Cardiac septum (tissue), 1 donor: ENCODE measurements at regions of chr19 and their contacts with region 1.

Region 1: GRCh38 chr19:56594783-56595547 is at the start of gene ZNF71:
- DNase-seq: peak; percentile 92
- total RNA-seq, gene ZNF71: 7.1 TPM

Region 2: GRCh38 chr19:56393119-56394012 is 201.6 kb before region 1 on chr19 and contains the start of gene ZNF582:
- intact Hi-C with region 1: no loop called
- DNase-seq: peak; percentile 95
- total RNA-seq, gene ZNF582: 4.9 TPM

Region 3: DNA sequence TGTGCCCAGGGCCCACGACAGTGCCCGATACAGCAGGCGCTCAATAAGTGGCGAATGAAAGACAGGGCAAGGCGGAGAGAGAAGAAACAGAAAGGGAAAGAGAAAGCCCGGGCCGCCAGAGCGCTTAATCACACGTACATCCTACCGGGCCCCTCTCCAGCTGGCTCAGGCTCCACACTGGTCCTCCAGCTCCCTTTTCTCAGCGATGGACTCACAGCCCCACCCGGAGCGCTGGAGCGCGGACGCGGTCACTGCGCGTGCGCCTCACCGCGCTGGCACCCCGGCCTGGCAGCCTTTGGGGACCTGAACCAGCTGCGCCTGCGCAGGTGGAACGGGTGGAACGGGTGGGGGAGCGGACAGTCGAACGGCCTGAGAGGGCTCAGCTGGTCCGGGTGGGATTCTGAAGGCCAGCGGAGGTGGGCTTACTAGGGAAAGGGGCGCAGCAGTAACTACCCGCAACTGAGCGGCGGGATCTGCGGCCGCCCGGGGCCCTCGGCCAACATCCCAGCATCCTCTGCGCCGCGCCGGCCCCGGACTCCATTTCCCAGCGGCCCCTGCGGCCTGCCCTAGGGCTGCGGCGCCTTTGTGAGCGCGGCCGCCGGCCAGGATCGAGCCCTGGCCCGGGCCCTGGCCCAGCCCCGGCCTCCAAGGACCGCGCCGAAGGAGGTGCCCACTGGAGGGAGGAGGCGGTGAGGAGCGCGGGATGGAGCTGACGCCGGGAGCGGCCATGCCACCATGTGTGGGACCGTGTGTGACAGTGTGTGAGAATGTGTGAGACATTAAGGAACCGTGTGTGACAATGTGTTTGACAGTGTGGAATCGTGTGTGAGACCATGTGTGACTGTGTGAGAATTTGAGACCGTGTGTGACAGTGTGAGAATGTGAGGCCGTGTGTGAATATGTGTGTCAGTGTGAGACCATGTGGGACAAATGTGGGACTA is 190.9 kb before region 1 on chr19 and contains the start of gene ZNF583:
- intact Hi-C with region 1: loop called (anchors 5 kb)
- DNase-seq: peak; percentile 96
- total RNA-seq, gene ZNF583: 7.3 TPM

Region 4: GRCh38 chr19:56507446-56508289 is 87.3 kb before region 1 on chr19 and contains the start of gene ZNF471:
- intact Hi-C with region 1: loop called (anchors 10 kb)
- DNase-seq: peak; percentile 98
- total RNA-seq, gene ZNF471: 7.2 TPM

Region 5: DNA sequence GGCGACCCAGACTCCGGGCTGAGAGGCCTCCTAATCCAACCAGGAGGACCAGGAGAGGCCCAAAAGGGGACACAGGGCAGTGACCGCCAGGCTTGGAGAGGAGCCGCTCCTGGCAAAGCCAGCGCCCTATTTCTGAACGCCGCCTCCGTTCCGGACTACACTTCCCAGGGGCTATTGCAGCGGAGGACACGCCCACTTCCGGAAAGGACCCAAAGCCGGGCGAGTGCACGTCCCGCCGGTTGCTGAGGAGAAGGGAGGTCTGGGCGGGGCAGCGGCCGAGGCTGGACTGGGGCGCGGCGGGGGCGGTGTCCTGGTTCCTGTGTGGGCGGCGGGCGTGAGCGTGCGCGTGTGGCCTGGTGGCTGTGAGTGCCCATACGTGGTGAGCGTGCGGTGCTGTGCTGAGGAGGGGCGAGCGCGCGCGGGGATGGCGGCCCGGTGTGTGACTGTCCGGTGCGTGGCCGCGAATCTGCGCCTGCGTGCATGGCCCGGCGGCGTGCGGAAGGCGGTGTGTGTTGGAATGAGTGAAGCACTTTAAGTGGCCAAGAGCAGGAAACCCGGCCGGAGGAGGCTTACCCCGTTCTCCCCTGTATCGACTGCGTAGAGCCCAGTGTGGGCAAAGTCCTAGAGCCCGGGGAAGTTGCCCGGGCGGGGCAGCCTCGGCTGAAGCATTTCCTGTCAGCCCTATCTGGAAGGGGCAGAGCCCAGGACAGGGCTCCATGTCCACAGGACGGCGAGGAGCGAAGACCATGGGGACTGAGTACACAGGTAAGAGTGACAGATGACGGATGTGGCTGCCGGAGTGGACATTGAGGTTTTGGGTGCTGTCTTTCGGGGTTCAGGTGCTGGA is 27.5 kb before region 1 on chr19 and contains the start of gene ZNF470:
- intact Hi-C with region 1: loop called (anchors 2 kb)
- DNase-seq: peak; percentile 96
- total RNA-seq, gene ZNF470: 6.6 TPM

Region 6: DNA sequence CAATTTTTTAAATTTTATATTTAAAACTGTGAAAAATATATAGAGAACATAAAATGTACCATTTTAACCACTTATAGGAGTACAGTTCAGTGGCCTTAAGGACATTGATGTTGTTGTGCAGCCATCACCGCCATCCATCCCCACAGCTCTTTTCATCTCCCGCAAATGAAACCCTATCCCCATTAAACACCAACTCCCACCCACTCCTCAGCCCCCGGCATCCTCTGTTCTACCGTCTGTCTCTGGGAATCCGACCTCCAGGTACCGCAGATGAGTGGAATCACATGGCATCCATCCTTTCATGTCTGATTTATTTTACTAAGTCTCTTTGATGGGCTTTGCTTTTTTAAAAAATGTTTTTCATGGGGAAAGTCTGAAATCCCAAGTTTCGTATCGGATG is 24.2 kb after region 1 on chr19:
- intact Hi-C with region 1: no loop called
- DNase-seq: no peak

Region 7: DNA sequence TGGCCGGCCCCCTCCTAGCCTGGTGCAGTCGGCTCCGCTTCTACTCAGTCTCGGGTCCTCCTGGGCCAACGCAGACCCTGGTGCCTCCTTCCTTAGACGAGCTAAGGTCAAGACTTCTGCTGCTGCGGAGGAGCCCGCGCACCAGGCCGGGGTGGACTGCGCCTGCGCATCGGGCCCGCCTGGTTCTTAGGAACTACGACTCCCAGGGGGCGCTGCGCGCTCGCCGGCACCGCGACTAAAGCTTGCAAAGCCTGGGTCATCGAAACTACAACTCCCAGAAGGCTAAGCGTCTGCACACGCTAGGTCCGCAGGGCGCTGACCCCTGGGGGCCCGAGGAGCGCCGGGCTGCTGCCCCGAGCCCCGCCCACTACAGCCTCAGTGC is 76.6 kb after region 1 on chr19 and contains the start of gene ZNF835:
- intact Hi-C with region 1: loop called (anchors 5 kb)
- DNase-seq: peak; percentile 96
- total RNA-seq, gene ZNF835: 2.6 TPM